Activated CD8-positive, alpha-beta T cell treated with anti-CD3 and anti-CD28 coated beads, Interleukin-2, amount 10 ng/mL, durations not matched to agents 7 days and 5 days (primary cell): ENCODE measurements at regions of chr17 and their contacts with region 1.

Region 1: GRCh38 chr17:83200202-83200699 is 120.8 kb downstream of the METRNL start:
- DNase-seq: peak; percentile 81
- ATAC-seq: peak; percentile 75
- H3K4me3 Mint-ChIP-seq: peak overlapping the region; percentile 76
- H3K27ac Mint-ChIP-seq: peak overlapping the region; percentile 100
- H3K4me1 Mint-ChIP-seq: peaks cover 61% of the 10 kb centered on the region
- H3K27me3 Mint-ChIP-seq: peaks cover 2% of the 10 kb centered on the region

Region 2: GRCh38 chr17:83083323-83084201 is 116.7 kb before region 1 on chr17:
- CTCF ChIA-PET with region 1: interaction called, 12 read pairs
- POLR2A ChIA-PET with region 1: interaction called, 5 read pairs
- DNase-seq: peak; percentile 68
- ATAC-seq: peak; percentile 32
- H3K4me3 Mint-ChIP-seq: peak overlapping the region; percentile 55
- H3K27ac Mint-ChIP-seq: peak overlapping the region; percentile 80
- H3K4me1 Mint-ChIP-seq: peaks cover 39% of the 10 kb centered on the region
- H3K27me3 Mint-ChIP-seq: peaks cover 7% of the 10 kb centered on the region